HepG2 (cell line): ENCODE measurements at regions of chr1 and their contacts with region 1.

Region 1: DNA sequence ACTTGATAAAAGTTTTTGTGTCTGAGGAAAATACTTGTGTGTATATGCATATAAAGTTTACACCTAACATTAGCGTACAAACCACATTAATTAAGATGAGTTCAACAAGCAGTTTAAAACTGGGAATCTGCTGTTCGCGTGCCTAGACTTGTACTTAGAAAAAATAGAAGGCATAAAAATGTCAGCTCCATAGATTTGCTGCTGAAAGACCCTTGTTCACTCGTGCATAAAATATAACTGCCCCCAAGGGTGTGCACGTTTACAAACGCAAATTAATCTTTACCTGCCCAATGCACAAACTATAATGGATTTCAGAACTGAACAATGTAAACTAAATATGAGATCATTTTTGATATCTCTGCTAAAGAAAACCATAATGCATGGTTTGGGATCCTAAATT is 392.3 kb upstream of the ADGRL2 start:
- DNase-seq: no peak
- ATAC-seq: no peak
- H3K4me3 ChIP-seq: no peak overlapping the region
- H3K27ac ChIP-seq: no peak overlapping the region
- H3K4me1 ChIP-seq: no peaks in the 10 kb centered on the region
- H3K27me3 ChIP-seq: no peaks in the 10 kb centered on the region
- CTCF ChIP-seq: no peak
- EP300 ChIP-seq: no peak
- POLR2A ChIP-seq: no peak
- RAD21 ChIP-seq: no peak

Region 2: DNA sequence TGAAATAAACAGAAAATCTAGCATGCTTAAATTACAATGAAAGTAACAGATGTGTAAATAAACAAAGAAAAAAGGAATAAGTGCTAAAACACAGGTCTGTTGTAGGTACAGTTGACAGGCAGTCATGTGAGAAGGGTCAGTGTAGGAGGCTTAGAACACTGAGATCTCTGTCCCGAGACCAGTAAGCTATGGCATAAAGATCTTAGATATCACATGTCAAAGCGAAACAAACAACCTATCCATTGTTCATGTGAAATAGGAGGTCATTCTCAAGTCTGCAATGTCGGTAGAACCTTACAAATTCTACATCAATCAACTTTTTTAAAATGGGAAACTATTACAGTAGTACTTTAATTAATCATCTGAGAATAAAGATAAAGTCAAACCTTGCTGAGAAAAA is 36.6 kb before region 1 on chr1:
- CTCF ChIA-PET with region 1: no interaction called
- POLR2A ChIA-PET with region 1: no interaction called
- in situ Hi-C with region 1: no loop called
- intact Hi-C with region 1: loop called (anchors 1 kb)
- DNase-seq: no peak
- ATAC-seq: no peak
- H3K4me3 ChIP-seq: no peak overlapping the region
- H3K27ac ChIP-seq: no peak overlapping the region
- H3K4me1 ChIP-seq: no peaks in the 10 kb centered on the region
- H3K27me3 ChIP-seq: no peaks in the 10 kb centered on the region
- CTCF ChIP-seq: no peak
- EP300 ChIP-seq: no peak
- POLR2A ChIP-seq: no peak
- RAD21 ChIP-seq: no peak